CD4-positive, alpha-beta T cell (primary cell): ENCODE measurements at regions of chr15 and their contacts with region 1.

Region 1: DNA sequence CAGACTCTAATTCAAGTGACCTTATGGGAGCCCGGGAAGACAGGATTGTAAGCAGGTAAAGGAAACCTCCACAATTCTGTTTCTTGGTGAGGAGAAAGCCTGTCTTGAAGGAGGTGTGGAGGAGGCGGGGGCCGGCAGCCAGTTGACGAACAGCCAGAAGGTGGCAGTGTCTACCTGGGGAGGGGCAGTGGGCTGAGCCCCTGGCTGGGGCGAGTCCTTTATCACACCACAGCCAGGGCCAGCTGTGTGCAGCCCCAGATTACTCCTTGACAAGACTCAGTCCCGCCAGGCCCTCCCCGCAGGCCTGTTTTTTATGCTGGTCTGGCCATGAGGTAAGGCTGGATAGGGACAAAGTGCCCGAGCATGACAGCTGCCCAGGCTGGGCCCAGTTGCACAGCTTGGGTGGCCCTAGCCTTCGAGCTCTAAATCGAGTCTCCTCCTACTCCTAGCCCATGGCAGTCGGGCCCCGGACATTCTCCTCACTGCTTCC is 40.9 kb upstream of the IDH2 start:
- DNase-seq: peak; percentile 35 to 78 (median 60)
- ATAC-seq: peak; percentile 67
- H3K4me3 ChIP-seq: peak overlapping the region; percentile 5
- H3K4me3 Mint-ChIP-seq: peak overlapping the region; percentile 66
- H3K27ac ChIP-seq: no peak overlapping the region
- H3K27ac Mint-ChIP-seq: peak overlapping the region; percentile 78
- H3K4me1 ChIP-seq: peaks cover 28% of the 10 kb centered on the region
- H3K4me1 Mint-ChIP-seq: peaks cover 37% of the 10 kb centered on the region
- H3K27me3 ChIP-seq: no peaks in the 10 kb centered on the region
- H3K27me3 Mint-ChIP-seq: no peaks in the 10 kb centered on the region
- CTCF ChIP-seq: peak; percentile 78

Region 2: DNA sequence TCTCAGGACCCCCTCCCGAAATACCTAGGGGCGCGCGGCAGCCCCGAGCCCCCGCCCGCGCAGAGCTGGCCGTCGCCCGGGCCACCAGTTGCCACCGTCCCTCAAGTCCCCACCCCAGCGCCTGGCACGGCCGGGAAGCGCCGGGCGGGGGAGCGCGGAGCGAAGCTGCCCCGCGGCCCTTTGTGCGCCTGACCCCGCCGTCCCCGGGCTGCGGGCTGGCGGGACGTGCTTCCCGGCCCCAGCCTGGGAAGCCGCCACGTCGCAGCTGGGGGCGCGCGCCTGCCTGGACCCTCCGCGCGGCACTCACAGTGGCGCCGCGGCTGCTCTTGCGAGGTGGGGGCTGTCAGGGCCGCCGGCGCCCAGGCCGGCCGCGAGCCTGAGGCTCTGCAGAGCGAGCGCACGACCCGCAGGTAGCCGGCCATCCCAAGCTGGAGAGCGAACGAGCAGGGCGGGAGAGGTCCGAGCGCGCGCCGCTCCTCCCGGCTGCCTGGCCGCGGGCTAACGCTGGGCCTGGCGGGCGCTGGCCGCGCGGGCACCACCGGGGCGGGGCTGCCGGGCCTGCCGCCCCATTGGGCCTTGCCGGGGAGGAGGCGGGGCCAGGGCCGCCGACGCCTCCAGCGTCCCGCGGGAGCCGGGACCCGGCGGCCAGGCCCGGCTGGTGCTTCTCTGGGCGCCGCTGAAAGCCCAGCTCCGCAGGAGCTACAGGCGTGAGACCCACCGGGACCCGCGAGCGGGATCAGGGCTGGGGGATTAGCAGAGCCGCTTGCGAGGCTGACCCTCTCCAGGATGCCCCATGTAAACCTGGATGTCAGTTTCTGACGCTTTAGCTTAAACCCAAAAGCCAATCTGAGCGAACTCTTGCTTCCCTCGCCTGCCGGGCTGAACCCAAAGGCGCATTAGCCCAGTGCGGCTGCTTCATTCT is 41.0 kb before region 1 on chr15 and contains the start of gene IDH2:
- CTCF ChIA-PET with region 1: no interaction called
- POLR2A ChIA-PET with region 1: interaction called, 3 read pairs
- intact Hi-C with region 1: loop called (anchors 1 to 2 kb)
- DNase-seq: peak; percentile 37 to 89 (median 63)
- ATAC-seq: peak; percentile 68
- H3K4me3 ChIP-seq: peak within 1 kb of the TSS; percentile 75
- H3K4me3 Mint-ChIP-seq: peak within 1 kb of the TSS; percentile 90
- H3K27ac ChIP-seq: peak within 1 kb of the TSS; percentile 84 to 86
- H3K27ac Mint-ChIP-seq: peak within 1 kb of the TSS; percentile 88
- H3K4me1 ChIP-seq: peaks cover 48% of the 10 kb centered on the region
- H3K4me1 Mint-ChIP-seq: peaks cover 58% of the 10 kb centered on the region
- H3K27me3 ChIP-seq: no peaks in the 10 kb centered on the region
- H3K27me3 Mint-ChIP-seq: no peaks in the 10 kb centered on the region
- CTCF ChIP-seq: no peak
- total RNA-seq, gene IDH2: 38.0 to 38.2 TPM

Region 3: GRCh38 chr15:90286678-90287077 is 143.5 kb after region 1 on chr15:
- CTCF ChIA-PET with region 1: interaction called, 5 read pairs
- POLR2A ChIA-PET with region 1: no interaction called
- intact Hi-C with region 1: loop called (anchors 1 kb)
- DNase-seq: peak in 11 of 14 experiments; percentile 14 to 77 (median 44)
- ATAC-seq: peak; percentile 98
- H3K4me3 ChIP-seq: no peak overlapping the region
- H3K4me3 Mint-ChIP-seq: no peak overlapping the region
- H3K27ac ChIP-seq: no peak overlapping the region
- H3K27ac Mint-ChIP-seq: no peak overlapping the region
- H3K4me1 ChIP-seq: peaks cover 2% of the 10 kb centered on the region
- H3K4me1 Mint-ChIP-seq: no peaks in the 10 kb centered on the region
- H3K27me3 ChIP-seq: no peaks in the 10 kb centered on the region
- H3K27me3 Mint-ChIP-seq: no peaks in the 10 kb centered on the region
- CTCF ChIP-seq: peak; percentile 89